Left cardiac atrium (tissue), 4 donors: ENCODE measurements at regions of chr1 and their contacts with region 1.

Region 1: GRCh38 chr1:8314346-8315280 is 3.3 kb upstream of the SLC45A1 start:
- DNase-seq: peak; percentile 70
- ATAC-seq: peak; percentile 69 to 79

Region 2: DNA sequence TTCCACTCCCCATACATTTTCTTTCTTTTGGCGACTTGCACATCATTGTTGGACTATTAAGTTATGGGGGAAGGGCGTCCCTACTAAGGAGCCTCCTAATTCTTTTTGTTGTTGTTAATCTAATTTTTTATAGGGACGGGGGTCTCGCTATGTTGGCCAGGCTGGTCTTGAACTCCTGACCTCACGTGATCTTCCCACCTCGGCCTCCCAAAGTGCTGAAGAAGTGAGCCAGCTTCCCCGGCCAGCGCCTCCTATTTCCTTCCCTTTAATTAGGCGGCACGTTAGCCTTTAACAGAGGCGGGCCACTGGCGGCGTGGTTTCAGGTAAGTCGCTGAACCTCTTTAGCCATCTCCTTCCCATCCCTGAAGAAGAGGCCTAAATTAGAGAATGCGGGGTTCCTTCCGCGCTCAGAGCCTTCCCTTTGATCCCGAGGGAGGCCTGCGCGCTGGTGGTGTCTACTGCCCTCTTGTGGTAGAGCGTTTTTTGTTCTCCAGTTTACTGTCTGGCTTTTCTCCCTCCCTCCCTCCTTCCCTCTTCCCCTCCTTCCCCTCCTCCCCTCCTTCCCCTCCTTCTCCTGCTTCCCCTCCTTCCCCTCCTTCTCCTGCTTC is 412.0 kb before region 1 on chr1:
- intact Hi-C with region 1: no loop called
- DNase-seq: peak; percentile 51
- ATAC-seq: peak; percentile 81 to 95

Region 3: GRCh38 chr1:7983086-7983778 is 331.4 kb before region 1 on chr1:
- intact Hi-C with region 1: loop called (anchors 2 kb)
- DNase-seq: no peak
- ATAC-seq: peak in 1 of 2 donors; percentile 10

Region 4: GRCh38 chr1:8015036-8015808 is 299.4 kb before region 1 on chr1:
- intact Hi-C with region 1: loop called in 1 of 2 experiments (anchors 5 kb)
- DNase-seq: no peak
- ATAC-seq: peak; percentile 75

Region 5: GRCh38 chr1:8026153-8026975 is 288.2 kb before region 1 on chr1 and contains the start of gene ERRFI1:
- intact Hi-C with region 1: loop called in 1 of 2 experiments (anchors 2 kb)
- DNase-seq: peak; percentile 95
- ATAC-seq: peak; percentile 94 to 96
- total RNA-seq, gene ERRFI1: 17.0 to 19.0 TPM

Region 6: DNA sequence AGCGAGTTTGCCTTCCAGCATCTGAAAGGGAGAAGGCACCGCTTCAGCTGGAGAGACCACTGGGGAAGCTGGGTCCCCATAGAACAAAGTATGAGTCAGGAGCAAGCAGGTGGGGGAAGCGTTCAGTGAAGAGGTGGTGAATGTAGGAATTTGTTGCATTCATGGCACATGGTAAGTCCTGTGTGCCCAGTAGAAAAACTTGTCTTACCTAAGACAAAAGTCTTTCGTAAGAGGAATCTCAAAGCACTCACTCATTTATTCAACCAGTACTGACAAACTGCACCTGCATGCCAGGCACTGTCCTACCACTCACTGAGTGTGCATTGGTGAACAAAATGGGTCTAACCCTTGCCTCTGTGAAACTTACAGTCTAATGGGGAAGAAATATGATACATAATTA is 279.3 kb before region 1 on chr1:
- intact Hi-C with region 1: loop called in 1 of 2 experiments (anchors 2 kb)
- DNase-seq: no peak
- ATAC-seq: no peak

Region 7: GRCh38 chr1:8137481-8138244 is 176.9 kb before region 1 on chr1:
- intact Hi-C with region 1: no loop called
- DNase-seq: peak; percentile 30
- ATAC-seq: peak; percentile 41 to 64

Region 8: DNA sequence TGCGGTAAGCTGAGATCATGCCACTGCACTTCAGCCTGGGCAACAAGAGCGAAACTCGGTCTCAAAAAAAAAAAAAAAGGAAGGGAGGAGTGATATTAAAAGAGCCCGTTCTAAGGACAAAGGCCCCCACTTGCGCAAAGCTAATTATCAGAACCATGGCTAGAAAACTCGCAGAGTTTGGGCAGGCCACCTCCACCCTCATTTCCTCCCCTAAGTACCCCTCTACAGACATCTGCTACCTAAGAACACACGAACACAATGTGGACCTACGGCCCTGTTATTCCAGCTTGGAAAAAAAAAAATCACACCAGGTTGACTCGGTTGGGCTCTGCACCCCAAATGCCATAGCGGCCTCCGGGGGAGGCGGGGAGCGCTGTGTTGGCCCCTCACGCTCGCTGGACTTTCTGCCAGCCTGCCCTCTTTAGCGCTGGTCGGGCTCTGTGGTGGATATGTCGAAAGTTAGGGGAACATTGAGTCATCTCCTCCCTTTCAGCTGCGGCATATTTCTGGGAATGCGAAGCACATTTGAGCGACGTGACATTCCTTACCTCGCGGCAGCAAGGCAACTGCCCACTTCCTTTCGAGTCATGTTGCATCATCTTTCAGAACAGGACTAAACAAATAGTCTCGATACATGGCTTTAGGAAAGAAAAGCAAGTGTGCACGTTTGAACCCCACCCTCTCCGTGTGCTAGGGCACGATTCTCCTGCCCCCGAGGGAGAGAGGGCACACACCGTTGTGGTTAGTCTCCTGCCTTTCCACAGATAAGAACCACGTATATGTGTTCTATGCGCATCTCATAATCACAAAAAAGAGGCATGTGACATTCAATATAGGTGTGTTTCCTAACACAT is 102.8 kb before region 1 on chr1:
- intact Hi-C with region 1: no loop called
- DNase-seq: peak; percentile 57
- ATAC-seq: peak; percentile 68 to 84